ENCODE measurements at regions of chr2 and their contacts with region 1.

Region 1: GRCh38 chr2:179422037-179422643 is 157.5 kb upstream of the SESTD1 start:
- DNase-seq: peak; percentile 79
- H3K4me3 Mint-ChIP-seq: no peak overlapping the region
- H3K27ac Mint-ChIP-seq: no peak overlapping the region
- H3K4me1 Mint-ChIP-seq: no peaks in the 10 kb centered on the region
- H3K27me3 Mint-ChIP-seq: no peaks in the 10 kb centered on the region
- CTCF ChIP-seq: peak; percentile 73

Region 2: GRCh38 chr2:179435000-179435399 is 12.9 kb after region 1 on chr2:
- CTCF ChIA-PET with region 1: interaction called, 15 read pairs
- POLR2A ChIA-PET with region 1: interaction called, 4 read pairs
- intact Hi-C with region 1: no loop called
- DNase-seq: no peak
- H3K4me3 Mint-ChIP-seq: no peak overlapping the region
- H3K27ac Mint-ChIP-seq: no peak overlapping the region
- H3K4me1 Mint-ChIP-seq: no peaks in the 10 kb centered on the region
- H3K27me3 Mint-ChIP-seq: no peaks in the 10 kb centered on the region
- CTCF ChIP-seq: no peak

Region 3: DNA sequence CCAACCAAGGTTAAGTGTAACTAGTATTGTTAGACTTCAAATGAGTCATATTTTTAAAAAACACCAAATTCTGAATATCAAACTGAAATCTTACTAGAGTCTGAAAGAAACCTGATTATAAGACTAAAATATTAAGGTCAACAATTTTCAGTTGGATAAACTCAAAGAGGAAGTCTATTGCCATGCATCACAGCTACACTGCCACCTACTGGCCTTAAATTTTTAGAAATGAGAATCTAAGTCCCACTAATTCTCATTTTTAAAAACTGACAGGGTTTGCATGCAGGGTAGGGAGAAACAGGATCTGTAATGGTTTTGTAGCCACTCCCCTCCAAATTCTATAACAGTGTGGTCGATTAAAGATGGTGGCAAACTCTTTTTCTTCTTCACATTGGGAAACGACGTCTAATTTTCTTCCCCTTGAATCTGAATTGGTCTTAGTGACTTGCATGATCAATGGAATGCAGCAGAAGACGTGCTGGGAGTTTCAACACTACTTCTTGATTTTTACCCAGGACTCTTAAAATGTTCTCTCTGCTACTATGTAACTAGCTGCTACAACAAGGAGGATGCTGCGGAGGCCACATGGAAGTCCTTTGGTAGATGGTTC is 18.6 kb after region 1 on chr2:
- CTCF ChIA-PET with region 1: interaction called, 13 read pairs
- POLR2A ChIA-PET with region 1: no interaction called
- intact Hi-C with region 1: no loop called
- DNase-seq: peak; percentile 43
- H3K4me3 Mint-ChIP-seq: no peak overlapping the region
- H3K27ac Mint-ChIP-seq: no peak overlapping the region
- H3K4me1 Mint-ChIP-seq: peaks cover 11% of the 10 kb centered on the region
- H3K27me3 Mint-ChIP-seq: no peaks in the 10 kb centered on the region
- CTCF ChIP-seq: peak; percentile 53

Region 4: DNA sequence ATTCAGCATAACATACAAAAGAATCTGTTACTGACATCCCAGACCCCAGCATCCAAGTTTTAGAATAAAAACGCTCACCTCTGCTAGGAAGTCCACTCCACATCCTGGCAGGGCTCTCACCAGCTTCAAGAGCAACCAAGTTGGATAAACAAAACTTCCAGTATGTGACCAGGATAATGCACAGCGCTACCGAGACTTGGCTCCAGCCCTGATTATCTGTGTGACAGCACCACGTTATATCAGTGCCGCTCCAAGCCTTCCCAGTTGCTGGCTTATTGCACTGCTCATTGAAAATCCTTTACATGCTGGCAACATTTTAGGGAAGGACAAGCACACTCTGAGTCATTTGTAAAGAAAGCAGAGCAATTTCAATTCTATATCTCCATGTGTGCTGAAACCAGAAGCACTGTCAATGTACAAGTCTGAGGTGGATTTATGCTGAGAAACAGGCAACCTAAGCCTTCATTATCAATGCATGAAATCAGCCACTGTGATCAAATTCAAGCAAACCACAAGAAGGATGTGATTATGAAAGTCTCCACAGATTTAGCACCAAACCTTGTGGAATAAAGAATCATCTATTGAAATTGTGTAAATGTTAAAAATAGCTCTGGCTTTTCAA is 323.6 kb after region 1 on chr2:
- CTCF ChIA-PET with region 1: interaction called, 33 read pairs
- POLR2A ChIA-PET with region 1: no interaction called
- intact Hi-C with region 1: no loop called
- DNase-seq: no peak
- H3K4me3 Mint-ChIP-seq: no peak overlapping the region
- H3K27ac Mint-ChIP-seq: peak overlapping the region; percentile 39
- H3K4me1 Mint-ChIP-seq: peaks cover 38% of the 10 kb centered on the region
- H3K27me3 Mint-ChIP-seq: no peaks in the 10 kb centered on the region
- CTCF ChIP-seq: no peak